A673 (cell line): ENCODE measurements at regions of chr7 and their contacts with region 1.

Region 1: GRCh38 chr7:33243319-33243881 is 114.0 kb downstream of the BBS9 start:
- DNase-seq: peak; percentile 71
- H3K4me3 ChIP-seq: no peak overlapping the region
- H3K27ac ChIP-seq: no peak overlapping the region
- H3K4me1 ChIP-seq: no peaks in the 10 kb centered on the region
- H3K27me3 ChIP-seq: no peaks in the 10 kb centered on the region
- CTCF ChIP-seq: peak; percentile 76

Region 2: DNA sequence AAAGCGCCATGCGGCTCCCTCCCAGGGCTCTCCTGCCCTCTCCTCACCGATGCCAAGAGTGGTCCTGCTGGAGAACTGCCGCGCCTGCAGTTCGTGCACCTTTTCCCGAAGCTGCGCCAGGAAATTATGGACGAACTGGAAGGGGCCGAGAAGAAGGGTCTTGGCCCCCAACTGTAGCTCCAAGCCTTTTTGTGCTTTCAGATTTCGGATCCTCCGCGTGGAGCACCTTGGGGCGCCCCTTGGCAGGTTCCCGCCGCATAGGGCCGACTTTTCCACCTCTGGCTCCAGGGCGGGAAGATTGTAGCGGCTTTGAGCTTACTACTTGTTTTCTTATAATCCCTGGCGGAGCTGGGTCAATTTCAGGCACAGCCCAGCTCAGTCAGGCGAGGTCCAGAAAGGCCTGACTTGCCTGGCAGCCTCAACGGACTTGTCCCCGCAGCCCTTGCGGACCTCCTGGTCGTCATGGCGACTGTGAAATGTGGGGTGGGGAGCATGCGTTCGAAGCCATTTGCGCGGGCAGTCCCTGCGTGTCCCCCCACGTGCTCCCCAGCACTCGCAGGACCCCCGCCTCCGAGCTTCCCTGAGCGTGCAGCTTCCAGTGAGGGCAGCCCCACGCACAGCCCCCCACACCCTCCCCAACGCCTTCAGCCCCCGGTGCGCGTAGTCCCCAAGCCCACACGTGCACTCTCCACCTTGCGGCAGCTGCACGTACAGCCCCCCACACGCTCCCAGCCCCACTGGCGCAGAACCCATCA is 481.8 kb before region 1 on chr7:
- CTCF ChIA-PET with region 1: no interaction called
- POLR2A ChIA-PET with region 1: no interaction called
- intact Hi-C with region 1: loop called (anchors 10 kb)
- DNase-seq: no peak
- H3K4me3 ChIP-seq: no peak overlapping the region
- H3K27ac ChIP-seq: no peak overlapping the region
- H3K4me1 ChIP-seq: no peaks in the 10 kb centered on the region
- H3K27me3 ChIP-seq: no peaks in the 10 kb centered on the region
- CTCF ChIP-seq: no peak

Region 3: DNA sequence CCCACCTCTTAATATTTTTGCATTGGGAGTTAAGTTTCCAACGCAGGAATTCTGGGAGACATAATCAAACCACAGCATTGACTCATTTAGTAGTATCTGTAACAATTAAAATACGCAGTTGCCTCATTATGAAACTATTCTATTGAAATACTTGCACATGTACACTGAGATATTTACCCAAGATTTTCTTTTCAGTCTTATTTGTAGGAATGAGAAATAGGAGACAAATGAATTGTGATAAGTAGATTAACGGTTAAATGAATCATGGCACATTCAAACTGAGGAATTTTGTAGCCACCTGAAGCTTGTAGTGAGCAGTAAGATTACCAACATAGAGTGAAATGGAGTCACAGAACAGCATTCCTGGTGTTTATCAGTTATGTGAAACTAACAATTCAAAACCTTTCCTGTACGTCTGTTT is 152.3 kb before region 1 on chr7:
- CTCF ChIA-PET with region 1: no interaction called
- POLR2A ChIA-PET with region 1: no interaction called
- intact Hi-C with region 1: no loop called
- DNase-seq: no peak
- H3K4me3 ChIP-seq: no peak overlapping the region
- H3K27ac ChIP-seq: no peak overlapping the region
- H3K4me1 ChIP-seq: no peaks in the 10 kb centered on the region
- H3K27me3 ChIP-seq: no peaks in the 10 kb centered on the region
- CTCF ChIP-seq: no peak

Region 4: DNA sequence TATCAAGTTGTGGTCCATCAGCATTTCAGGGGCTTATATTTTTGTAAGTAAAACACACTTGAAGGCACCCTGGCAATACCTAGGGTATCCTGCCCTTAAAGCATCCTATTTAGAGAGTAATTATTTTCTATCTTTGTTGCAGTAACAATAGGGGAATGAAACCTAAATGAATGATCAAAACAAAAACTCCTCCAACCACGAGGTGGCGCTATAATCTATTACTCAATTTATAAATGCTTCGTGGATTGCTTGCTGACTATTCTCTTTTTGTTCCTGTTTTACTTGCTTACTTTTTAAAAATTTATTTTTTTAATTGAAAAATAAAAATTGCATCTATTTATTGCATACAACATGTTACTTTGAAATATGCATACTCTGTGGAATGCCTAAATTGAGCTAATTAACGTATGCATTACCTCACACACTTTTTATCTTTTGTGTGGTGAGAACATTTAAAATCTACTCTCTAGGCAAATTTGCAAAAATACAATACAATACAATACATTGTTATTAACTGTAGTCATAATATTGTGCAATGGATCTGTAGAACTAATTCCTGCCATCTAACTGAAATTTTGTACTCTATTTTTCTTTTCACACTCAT is 514.3 kb after region 1 on chr7:
- CTCF ChIA-PET with region 1: no interaction called
- POLR2A ChIA-PET with region 1: no interaction called
- intact Hi-C with region 1: loop called (anchors 10 kb)
- DNase-seq: peak; percentile 68
- H3K4me3 ChIP-seq: no peak overlapping the region
- H3K27ac ChIP-seq: no peak overlapping the region
- H3K4me1 ChIP-seq: peaks cover 32% of the 10 kb centered on the region
- H3K27me3 ChIP-seq: no peaks in the 10 kb centered on the region
- CTCF ChIP-seq: peak; percentile 69

Region 5: GRCh38 chr7:33904681-33905388 is 661.4 kb after region 1 on chr7:
- CTCF ChIA-PET with region 1: no interaction called
- POLR2A ChIA-PET with region 1: no interaction called
- intact Hi-C with region 1: loop called (anchors 10 kb)
- DNase-seq: peak; percentile 70
- H3K4me3 ChIP-seq: peak overlapping the region; percentile 68
- H3K27ac ChIP-seq: peak overlapping the region; percentile 67
- H3K4me1 ChIP-seq: peaks cover 12% of the 10 kb centered on the region
- H3K27me3 ChIP-seq: peaks cover 5% of the 10 kb centered on the region
- CTCF ChIP-seq: 0 out of 2 replicates have a peak, but pooled peaks have one; percentile 38